Endothelial cell of umbilical vein (primary cell): ENCODE measurements at regions of chr13 and their contacts with region 1.

Region 1: DNA sequence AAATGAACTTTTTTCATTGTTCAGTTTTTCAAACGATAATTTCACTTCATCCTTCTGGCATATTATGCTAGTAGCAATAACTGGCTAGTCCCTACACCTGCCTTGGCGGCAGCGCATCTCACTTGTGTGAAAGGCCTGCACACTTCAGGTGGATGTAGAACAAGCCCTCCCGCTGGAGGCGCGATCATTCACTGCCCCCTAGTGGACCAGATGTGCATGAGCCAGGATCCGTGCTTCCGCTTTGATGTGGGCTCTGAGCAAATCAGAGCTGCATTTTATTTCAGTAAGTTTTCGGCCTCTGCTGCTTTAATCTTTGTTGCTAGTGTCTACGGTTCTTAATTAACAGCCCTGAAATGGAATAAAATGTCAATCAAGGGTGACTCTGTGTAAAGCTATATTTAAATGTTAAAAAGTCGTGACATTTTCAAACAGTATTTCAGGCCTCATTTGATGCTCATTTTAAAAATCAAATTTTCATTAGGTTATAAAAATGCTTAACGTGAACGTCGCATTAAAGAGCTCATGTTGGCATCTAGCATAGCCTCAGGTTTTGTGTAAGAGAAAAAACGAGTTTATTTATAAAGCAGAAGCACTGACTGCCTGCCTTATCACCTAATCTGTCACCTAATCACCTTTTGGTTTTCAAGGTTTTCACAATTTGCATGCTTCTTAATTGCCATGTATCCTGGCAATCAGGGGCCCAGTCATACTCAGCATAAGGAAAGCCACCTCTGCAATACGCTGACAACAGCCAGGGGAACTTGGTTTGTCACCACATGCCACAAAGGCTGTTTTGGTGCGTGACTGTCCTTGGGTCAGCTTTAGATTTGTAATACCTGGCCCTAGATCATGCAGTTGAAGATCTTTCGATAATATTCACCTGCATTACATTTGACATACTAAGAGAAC is 112.2 kb downstream of the TEX26 start:
- DNase-seq: peak; percentile 83
- H3K4me3 ChIP-seq: no peak overlapping the region
- H3K27ac ChIP-seq: peak overlapping the region; percentile 68
- H3K4me1 ChIP-seq: peaks cover 35% of the 10 kb centered on the region
- H3K27me3 ChIP-seq: no peaks in the 10 kb centered on the region
- CTCF ChIP-seq: peak; percentile 92 to 93
- POLR2A ChIP-seq: no peak

Region 2: DNA sequence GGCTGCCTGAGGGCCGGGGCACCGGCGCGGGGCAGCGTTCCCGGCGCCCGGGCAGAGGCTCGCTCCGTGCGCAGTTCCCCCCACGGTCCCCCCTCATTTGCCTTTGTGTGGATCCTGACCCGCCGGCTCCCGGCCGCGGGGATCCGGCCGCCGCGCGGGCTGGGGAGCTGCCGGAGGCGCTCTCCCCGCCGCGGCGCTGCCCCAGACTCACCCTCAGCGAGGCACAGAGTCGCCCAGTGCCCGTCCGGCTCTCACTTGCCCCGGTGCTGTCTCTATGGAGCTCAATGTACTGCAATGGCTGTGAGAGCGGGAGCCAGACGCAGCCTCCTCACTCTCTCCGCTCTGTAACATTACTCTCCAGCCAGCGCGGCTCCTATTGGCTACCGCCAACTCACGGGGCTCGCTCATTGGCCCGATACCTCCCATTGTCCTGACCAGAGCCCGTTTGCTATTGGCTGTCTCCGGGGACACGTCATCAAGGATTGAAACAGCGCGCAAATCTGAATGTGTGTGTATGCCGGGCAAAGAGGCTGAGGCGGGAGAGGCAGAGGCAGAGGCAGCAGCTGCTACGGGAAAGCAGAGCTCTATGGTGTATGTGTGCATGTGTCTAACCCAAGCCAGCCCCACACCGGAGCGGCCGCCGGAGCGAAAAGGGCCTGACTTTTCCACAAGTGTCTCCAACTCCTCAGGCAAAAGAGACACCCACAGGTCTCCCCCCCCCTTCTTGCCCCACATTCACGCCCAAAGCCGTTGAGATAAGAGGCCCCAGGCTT is 578.9 kb before region 1 on chr13 and contains the start of gene HMGB1:
- CTCF ChIA-PET with region 1: interaction called, 3 read pairs
- POLR2A ChIA-PET with region 1: no interaction called
- dilution Hi-C with region 1: no loop called
- intact Hi-C with region 1: loop called (anchors 1 kb)
- DNase-seq: peak; percentile 98
- H3K4me3 ChIP-seq: peak within 1 kb of the TSS; percentile 48 to 69 (median 66)
- H3K27ac ChIP-seq: peak within 1 kb of the TSS; percentile 85
- H3K4me1 ChIP-seq: peaks cover 25% of the 10 kb centered on the region
- H3K27me3 ChIP-seq: no peaks in the 10 kb centered on the region
- CTCF ChIP-seq: no peak
- POLR2A ChIP-seq: peak; percentile 80
- total RNA-seq, gene HMGB1: 670 and 675 TPM in 2 replicates

Region 3: GRCh38 chr13:30792285-30793000 is 252.2 kb before region 1 on chr13:
- CTCF ChIA-PET with region 1: interaction called, 17 read pairs
- POLR2A ChIA-PET with region 1: no interaction called
- dilution Hi-C with region 1: no loop called
- intact Hi-C with region 1: no loop called
- DNase-seq: peak; percentile 96
- H3K4me3 ChIP-seq: no peak overlapping the region
- H3K27ac ChIP-seq: peak overlapping the region; percentile 73
- H3K4me1 ChIP-seq: peaks cover 31% of the 10 kb centered on the region
- H3K27me3 ChIP-seq: no peaks in the 10 kb centered on the region
- CTCF ChIP-seq: peak; percentile 47 to 63
- POLR2A ChIP-seq: no peak

Region 4: DNA sequence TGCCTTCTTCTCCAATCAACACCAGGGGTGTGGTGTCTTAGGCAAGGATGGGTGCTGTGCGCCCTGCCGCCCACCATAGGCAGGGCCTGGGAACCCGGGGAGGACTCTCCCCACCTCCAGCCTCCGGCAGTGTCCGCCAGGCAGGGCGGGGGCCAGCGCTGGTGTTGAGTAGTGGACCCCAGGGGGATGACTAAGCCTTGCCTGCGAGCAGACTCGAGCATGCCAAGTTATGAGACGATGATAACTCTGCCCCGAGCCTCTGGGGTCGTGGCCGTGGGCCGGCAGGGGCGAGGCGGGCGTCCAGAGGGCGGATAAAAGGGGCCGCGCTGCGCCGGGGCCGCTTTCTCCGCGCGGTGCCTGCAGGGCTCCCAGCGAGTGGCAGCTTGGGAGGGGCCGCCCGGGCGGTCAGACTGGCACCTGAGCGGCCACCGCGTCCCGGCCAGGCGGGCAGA is 138.7 kb before region 1 on chr13 and contains the start of gene MEDAG:
- CTCF ChIA-PET with region 1: interaction called, 10 read pairs
- POLR2A ChIA-PET with region 1: no interaction called
- dilution Hi-C with region 1: no loop called
- intact Hi-C with region 1: loop called (anchors 2 kb)
- DNase-seq: peak; percentile 85
- H3K4me3 ChIP-seq: peak within 1 kb of the TSS; percentile 7 to 43 (median 38)
- H3K27ac ChIP-seq: peak within 1 kb of the TSS; percentile 79
- H3K4me1 ChIP-seq: peaks cover 32% of the 10 kb centered on the region
- H3K27me3 ChIP-seq: no peaks in the 10 kb centered on the region
- CTCF ChIP-seq: no peak
- POLR2A ChIP-seq: peak; percentile 67
- total RNA-seq, gene MEDAG: 27.2 and 30.2 TPM in 2 replicates

Region 5: GRCh38 chr13:31090991-31091531 is 46.4 kb after region 1 on chr13:
- CTCF ChIA-PET with region 1: interaction called, 8 read pairs
- POLR2A ChIA-PET with region 1: no interaction called
- dilution Hi-C with region 1: no loop called
- intact Hi-C with region 1: loop called (anchors 2 kb)
- DNase-seq: peak; percentile 70
- H3K4me3 ChIP-seq: no peak overlapping the region
- H3K27ac ChIP-seq: peak overlapping the region; percentile 2
- H3K4me1 ChIP-seq: peaks cover 8% of the 10 kb centered on the region
- H3K27me3 ChIP-seq: peaks cover 4% of the 10 kb centered on the region in 2 experiments
- CTCF ChIP-seq: no peak
- POLR2A ChIP-seq: no peak